Endothelial cell of umbilical vein (primary cell): ENCODE measurements at regions of chr6 and their contacts with region 1.

Region 1: GRCh38 chr6:3929281-3929798 is 80.2 kb downstream of the FAM50B start:
- DNase-seq: no peak
- H3K4me3 ChIP-seq: no peak overlapping the region
- H3K27ac ChIP-seq: no peak overlapping the region
- H3K4me1 ChIP-seq: no peaks in the 10 kb centered on the region
- H3K27me3 ChIP-seq: no peaks in the 10 kb centered on the region
- CTCF ChIP-seq: no peak
- POLR2A ChIP-seq: no peak

Region 2: GRCh38 chr6:3742426-3743344 is 186.7 kb before region 1 on chr6:
- CTCF ChIA-PET with region 1: interaction called, 16 read pairs
- POLR2A ChIA-PET with region 1: no interaction called
- dilution Hi-C with region 1: no loop called
- intact Hi-C with region 1: loop called (anchors 1 kb)
- DNase-seq: peak; percentile 88
- H3K4me3 ChIP-seq: peak overlapping the region in 1 of 3 experiments; percentile 25
- H3K27ac ChIP-seq: peak overlapping the region; percentile 74
- H3K4me1 ChIP-seq: peaks cover 77% of the 10 kb centered on the region
- H3K27me3 ChIP-seq: no peaks in the 10 kb centered on the region
- CTCF ChIP-seq: peak; percentile 88 to 93
- POLR2A ChIP-seq: no peak

Region 3: GRCh38 chr6:3797231-3798054 is 131.9 kb before region 1 on chr6:
- CTCF ChIA-PET with region 1: interaction called, 13 read pairs
- POLR2A ChIA-PET with region 1: interaction called, 6 read pairs
- dilution Hi-C with region 1: no loop called
- intact Hi-C with region 1: no loop called
- DNase-seq: peak; percentile 83
- H3K4me3 ChIP-seq: no peak overlapping the region
- H3K27ac ChIP-seq: peak overlapping the region; percentile 100
- H3K4me1 ChIP-seq: peaks cover 39% of the 10 kb centered on the region
- H3K27me3 ChIP-seq: no peaks in the 10 kb centered on the region
- CTCF ChIP-seq: no peak
- POLR2A ChIP-seq: peak; percentile 58

Region 4: DNA sequence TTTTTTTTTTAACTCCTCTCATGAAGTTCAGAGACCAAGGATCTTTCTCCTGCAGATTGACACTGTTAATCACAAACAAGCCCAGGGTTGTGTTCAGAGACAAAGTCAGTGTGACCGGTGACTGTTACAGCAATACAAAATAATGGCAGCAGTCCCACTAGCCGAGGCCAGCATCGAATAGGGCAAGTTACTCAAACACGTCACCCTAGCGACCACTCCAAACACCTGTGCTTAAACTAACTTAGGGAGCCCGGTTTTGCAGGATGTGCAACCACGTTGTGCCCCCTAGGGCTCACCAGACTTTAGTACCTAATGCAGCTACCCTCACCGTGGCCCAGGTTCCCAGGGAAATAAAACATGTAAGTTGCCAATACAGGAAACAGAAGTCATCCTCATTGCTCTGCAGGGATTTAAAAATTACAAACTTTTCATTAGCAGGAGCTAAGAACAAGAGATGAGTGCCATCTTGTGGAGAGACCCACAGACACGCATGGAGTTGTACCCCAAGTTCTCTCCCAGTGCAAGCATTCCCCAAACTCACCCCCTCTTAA is 42.1 kb before region 1 on chr6:
- CTCF ChIA-PET with region 1: interaction called, 18 read pairs
- POLR2A ChIA-PET with region 1: no interaction called
- dilution Hi-C with region 1: no loop called
- intact Hi-C with region 1: loop called (anchors 1 kb)
- DNase-seq: peak; percentile 67
- H3K4me3 ChIP-seq: no peak overlapping the region
- H3K27ac ChIP-seq: no peak overlapping the region
- H3K4me1 ChIP-seq: peaks cover 19% of the 10 kb centered on the region
- H3K27me3 ChIP-seq: no peaks in the 10 kb centered on the region
- CTCF ChIP-seq: peak; percentile 45 to 62
- POLR2A ChIP-seq: no peak

Region 5: DNA sequence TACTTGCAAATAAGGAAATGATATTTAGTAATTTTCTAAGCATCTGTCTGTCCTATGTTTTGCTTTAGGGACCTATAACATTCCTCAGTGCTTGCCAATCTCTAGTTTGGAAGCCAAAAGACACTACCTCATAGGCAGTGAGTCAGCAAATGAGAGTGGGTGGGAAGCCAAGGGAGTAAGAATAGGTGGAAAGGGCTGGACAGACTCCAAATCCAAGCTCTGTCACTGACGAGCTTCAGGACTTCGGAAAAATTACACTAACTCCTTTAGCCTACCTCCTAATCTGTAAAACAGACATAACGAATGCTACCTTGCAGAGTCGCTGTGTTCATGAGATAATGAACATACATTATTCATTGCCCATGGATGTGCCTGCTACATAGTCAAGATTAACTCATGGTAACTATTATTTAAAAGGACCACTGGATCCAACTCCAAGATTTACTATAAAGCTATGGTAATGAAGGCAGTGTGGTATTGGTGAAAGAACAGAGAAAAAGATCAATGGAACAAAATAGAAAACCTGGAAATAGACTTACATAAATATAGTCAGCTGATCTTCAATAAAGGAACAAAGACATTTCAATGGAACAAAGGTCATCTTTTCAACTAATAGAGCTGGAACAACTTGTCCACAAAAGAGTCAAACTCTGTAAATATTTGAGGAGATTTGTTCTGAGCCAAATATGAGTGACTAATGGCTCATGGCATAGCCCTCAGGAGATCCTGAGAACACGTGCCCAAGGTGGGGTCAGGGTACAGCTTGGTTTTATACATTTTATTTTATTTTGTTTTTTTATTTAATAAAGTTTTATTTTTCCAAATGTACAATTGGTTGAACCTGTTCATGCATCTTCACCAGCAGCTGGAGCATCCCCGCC is 16.0 kb before region 1 on chr6:
- CTCF ChIA-PET with region 1: interaction called, 33 read pairs
- POLR2A ChIA-PET with region 1: interaction called, 5 read pairs
- dilution Hi-C with region 1: no loop called
- intact Hi-C with region 1: no loop called
- DNase-seq: peak; percentile 99
- H3K4me3 ChIP-seq: peak overlapping the region in 1 of 3 experiments; percentile 10
- H3K27ac ChIP-seq: peak overlapping the region; percentile 98
- H3K4me1 ChIP-seq: peaks cover 72% of the 10 kb centered on the region
- H3K27me3 ChIP-seq: no peaks in the 10 kb centered on the region
- CTCF ChIP-seq: no peak
- POLR2A ChIP-seq: peak; percentile 52

Region 6: GRCh38 chr6:4008324-4009047 is 79.1 kb after region 1 on chr6:
- CTCF ChIA-PET with region 1: interaction called, 4 read pairs
- POLR2A ChIA-PET with region 1: interaction called, 12 read pairs
- dilution Hi-C with region 1: no loop called
- intact Hi-C with region 1: no loop called
- DNase-seq: peak; percentile 76
- H3K4me3 ChIP-seq: no peak overlapping the region
- H3K27ac ChIP-seq: no peak overlapping the region
- H3K4me1 ChIP-seq: no peaks in the 10 kb centered on the region
- H3K27me3 ChIP-seq: no peaks in the 10 kb centered on the region
- CTCF ChIP-seq: peak; percentile 19 to 45
- POLR2A ChIP-seq: no peak